Calu3 (cell line): ENCODE measurements at regions of chr7 and their contacts with region 1.

Region 1: DNA sequence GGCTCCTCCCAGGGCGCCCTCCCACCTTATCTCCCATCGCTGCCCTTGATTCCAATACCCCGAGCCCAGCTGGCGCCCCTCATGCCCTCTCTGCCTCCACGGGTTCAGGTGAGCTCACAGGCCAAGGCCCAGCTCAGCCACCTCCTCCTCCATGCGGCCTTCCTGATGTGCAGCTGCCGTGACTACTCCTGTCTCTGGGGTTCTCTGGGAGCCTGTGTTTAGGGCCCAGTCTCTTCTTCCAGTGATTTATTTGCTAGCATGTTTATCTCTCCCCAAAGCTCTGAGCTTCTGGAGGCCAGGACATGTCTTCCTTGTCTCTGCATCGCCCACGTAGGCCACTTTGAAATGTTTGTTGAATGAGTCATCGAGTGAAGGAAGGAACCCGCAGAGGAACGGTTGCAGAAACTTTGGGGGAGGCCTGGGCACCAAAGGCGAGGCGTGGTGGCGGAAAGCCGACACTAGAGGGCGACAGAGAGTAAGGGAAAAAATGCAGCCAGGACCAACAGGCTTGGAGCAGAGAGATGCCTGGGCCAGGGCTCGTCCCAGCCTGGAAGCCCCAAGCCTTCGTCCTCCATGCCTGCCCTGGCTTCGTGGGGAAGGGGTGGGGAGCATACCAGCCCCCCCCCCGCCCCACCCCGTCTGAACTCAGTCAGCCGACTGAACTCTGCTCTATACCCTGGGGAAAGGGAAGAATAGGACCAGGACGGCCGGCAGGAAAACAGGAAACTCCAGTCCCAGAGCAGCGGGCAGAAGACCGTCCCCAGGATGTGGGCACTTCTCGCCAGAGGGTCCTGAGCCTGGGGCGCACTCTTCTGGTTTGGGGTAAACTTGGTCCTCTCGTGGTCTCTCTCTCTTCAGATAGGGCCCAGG is 10.9 kb upstream of the HSPB1 start:
- DNase-seq: peak; percentile 93
- H3K4me3 Mint-ChIP-seq: peak overlapping the region; percentile 48
- H3K27ac Mint-ChIP-seq: peak overlapping the region; percentile 83
- H3K4me1 Mint-ChIP-seq: peaks cover 22% of the 10 kb centered on the region
- H3K27me3 Mint-ChIP-seq: no peaks in the 10 kb centered on the region
- CTCF ChIP-seq: peak; percentile 78

Region 2: DNA sequence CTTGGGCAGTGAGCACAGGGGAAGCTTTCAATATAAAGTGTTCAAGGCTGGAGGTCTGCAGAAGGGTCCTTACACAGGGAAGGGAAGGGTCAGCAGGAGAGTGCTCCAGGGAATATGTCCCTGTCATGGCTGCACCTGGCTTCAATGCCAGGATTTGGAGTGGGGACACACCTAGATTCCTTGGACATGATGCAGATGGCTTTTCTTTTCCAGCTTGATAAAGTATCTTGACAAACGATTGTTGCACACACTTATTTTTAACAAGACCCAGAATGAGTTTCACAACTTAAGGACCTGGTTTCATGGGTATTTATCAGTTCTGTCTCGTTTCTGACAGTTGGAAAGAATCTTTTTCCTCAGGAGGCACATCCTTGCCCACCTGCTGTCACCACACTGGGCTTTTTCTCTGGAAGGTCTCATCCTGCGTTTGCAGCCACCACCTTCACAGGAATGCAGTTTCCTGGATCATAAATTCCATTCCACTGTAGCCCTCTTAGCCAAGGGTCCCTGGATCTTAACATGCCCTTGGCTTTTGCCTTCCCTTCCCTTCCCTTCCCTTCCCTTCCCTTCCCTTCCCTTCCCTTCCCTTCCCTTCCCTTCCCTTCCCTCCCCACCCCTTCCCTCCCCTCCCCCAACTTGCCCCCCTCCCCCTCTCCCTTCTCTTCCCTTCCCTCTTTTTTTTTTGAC is 68.1 kb before region 1 on chr7:
- CTCF ChIA-PET with region 1: no interaction called
- intact Hi-C with region 1: no loop called
- DNase-seq: no peak
- H3K4me3 Mint-ChIP-seq: no peak overlapping the region
- H3K27ac Mint-ChIP-seq: no peak overlapping the region
- H3K4me1 Mint-ChIP-seq: no peaks in the 10 kb centered on the region
- H3K27me3 Mint-ChIP-seq: peaks cover 51% of the 10 kb centered on the region
- CTCF ChIP-seq: no peak

Region 3: DNA sequence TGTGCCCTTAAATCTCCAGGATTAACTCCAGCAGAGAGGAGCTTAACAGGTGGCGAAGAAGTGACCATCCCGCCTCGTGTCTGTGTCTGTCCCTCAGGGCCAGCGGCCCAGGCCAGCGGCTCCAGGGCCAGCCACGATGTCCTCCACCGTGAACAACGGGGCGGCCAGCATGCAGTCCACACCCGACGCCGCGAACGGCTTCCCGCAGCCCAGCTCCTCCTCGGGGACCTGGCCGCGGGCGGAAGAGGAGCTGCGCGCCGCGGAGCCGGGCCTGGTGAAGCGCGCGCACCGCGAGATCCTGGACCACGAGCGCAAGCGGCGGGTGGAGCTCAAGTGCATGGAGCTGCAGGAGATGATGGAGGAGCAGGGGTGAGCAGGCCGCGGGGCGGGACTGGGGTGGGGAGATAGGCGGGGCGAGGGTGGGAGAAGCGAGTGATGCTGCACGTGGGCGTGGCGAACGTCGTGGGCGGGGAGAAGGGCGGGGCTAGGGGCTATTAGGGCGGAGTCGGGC is 56.6 kb before region 1 on chr7:
- CTCF ChIA-PET with region 1: no interaction called
- intact Hi-C with region 1: no loop called
- DNase-seq: peak; percentile 63
- H3K4me3 Mint-ChIP-seq: no peak overlapping the region
- H3K27ac Mint-ChIP-seq: no peak overlapping the region
- H3K4me1 Mint-ChIP-seq: no peaks in the 10 kb centered on the region
- H3K27me3 Mint-ChIP-seq: peaks cover 83% of the 10 kb centered on the region
- CTCF ChIP-seq: no peak

Region 4: GRCh38 chr7:76262683-76263402 is 28.7 kb before region 1 on chr7:
- CTCF ChIA-PET with region 1: interaction called, 10 read pairs
- intact Hi-C with region 1: no loop called
- DNase-seq: peak; percentile 59
- H3K4me3 Mint-ChIP-seq: no peak overlapping the region
- H3K27ac Mint-ChIP-seq: no peak overlapping the region
- H3K4me1 Mint-ChIP-seq: no peaks in the 10 kb centered on the region
- H3K27me3 Mint-ChIP-seq: peaks cover 19% of the 10 kb centered on the region
- CTCF ChIP-seq: peak; percentile 45

Region 5: DNA sequence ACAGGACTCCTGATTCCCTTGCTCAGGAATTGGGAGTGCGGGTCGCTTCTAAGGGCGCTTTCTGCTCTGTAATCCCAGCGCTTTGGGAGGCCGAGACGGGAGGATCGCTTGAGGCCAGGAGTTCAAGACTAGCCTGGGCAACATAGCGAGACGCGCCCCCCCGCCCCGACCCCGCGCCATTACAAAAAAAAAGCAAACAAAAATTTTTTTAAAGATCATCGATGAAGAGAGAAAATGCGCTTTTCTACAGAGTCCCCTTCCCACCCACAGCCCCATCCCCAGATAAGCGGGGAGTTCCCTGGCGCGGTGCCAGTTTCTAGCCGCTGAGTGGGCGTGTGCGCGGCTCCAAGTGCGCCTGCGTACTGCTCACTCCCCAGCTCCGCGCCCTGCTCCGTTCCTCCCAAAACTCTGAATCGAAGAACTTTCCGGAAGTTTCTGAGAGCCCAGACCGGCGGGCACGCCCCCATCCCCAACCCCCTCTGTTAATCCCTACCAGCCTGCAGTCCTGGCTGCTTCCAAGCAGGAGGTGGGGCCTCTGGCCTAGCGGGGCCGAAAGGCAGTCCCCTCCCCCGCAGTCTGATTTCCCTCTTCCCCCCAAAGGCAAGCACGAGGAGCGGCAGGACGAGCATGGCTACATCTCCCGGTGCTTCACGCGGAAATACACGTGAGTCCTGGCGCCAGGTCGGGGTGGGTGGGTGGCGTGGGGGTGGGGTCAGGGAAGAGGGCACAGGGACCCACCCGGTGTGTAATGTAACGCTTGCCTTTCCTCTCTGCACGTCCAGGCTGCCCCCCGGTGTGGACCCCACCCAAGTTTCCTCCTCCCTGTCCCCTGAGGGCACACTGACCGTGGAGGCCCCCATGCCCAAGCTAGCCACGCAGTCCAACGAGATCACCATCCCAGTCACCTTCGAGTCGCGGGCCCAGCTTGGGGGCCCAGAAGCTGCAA is 11.9 kb after region 1 on chr7:
- CTCF ChIA-PET with region 1: interaction called, 10 read pairs
- intact Hi-C with region 1: no loop called
- DNase-seq: peak; percentile 77
- H3K4me3 Mint-ChIP-seq: peak overlapping the region; percentile 59
- H3K27ac Mint-ChIP-seq: peak overlapping the region; percentile 72
- H3K4me1 Mint-ChIP-seq: peaks cover 16% of the 10 kb centered on the region
- H3K27me3 Mint-ChIP-seq: no peaks in the 10 kb centered on the region
- CTCF ChIP-seq: no peak

Region 6: GRCh38 chr7:76314042-76314721 is 22.6 kb after region 1 on chr7:
- CTCF ChIA-PET with region 1: interaction called, 26 read pairs
- intact Hi-C with region 1: loop called (anchors 1 kb)
- DNase-seq: peak; percentile 93
- H3K4me3 Mint-ChIP-seq: no peak overlapping the region
- H3K27ac Mint-ChIP-seq: no peak overlapping the region
- H3K4me1 Mint-ChIP-seq: peaks cover 17% of the 10 kb centered on the region
- H3K27me3 Mint-ChIP-seq: no peaks in the 10 kb centered on the region
- CTCF ChIP-seq: peak; percentile 96

Region 7: DNA sequence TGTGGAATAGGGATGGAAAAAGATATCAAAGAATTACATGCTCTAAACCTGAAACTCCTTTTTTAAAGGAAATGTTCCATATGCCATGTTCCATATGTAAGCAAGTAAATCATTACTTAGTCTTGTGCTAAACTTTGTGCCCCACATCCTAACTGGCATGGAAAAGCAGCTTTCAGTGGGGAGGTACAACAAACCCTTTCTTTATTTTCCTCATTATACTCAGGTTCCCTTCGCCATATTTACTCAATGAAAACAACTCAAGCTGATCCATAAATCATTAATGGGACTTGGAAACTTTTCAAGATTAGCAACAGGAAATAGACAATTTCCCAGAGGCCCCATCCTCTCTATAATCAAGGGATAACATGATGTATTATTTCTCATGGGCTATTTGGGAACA is 1068.5 kb after region 1 on chr7:
- CTCF ChIA-PET with region 1: no interaction called
- intact Hi-C with region 1: no loop called
- DNase-seq: peak; percentile 9
- H3K4me3 Mint-ChIP-seq: peak overlapping the region; percentile 30
- H3K27ac Mint-ChIP-seq: peak overlapping the region; percentile 79
- H3K4me1 Mint-ChIP-seq: peaks cover 17% of the 10 kb centered on the region
- H3K27me3 Mint-ChIP-seq: no peaks in the 10 kb centered on the region
- CTCF ChIP-seq: no peak